ENCODE measurements at regions of chr17 and their contacts with region 1.

Region 1: DNA sequence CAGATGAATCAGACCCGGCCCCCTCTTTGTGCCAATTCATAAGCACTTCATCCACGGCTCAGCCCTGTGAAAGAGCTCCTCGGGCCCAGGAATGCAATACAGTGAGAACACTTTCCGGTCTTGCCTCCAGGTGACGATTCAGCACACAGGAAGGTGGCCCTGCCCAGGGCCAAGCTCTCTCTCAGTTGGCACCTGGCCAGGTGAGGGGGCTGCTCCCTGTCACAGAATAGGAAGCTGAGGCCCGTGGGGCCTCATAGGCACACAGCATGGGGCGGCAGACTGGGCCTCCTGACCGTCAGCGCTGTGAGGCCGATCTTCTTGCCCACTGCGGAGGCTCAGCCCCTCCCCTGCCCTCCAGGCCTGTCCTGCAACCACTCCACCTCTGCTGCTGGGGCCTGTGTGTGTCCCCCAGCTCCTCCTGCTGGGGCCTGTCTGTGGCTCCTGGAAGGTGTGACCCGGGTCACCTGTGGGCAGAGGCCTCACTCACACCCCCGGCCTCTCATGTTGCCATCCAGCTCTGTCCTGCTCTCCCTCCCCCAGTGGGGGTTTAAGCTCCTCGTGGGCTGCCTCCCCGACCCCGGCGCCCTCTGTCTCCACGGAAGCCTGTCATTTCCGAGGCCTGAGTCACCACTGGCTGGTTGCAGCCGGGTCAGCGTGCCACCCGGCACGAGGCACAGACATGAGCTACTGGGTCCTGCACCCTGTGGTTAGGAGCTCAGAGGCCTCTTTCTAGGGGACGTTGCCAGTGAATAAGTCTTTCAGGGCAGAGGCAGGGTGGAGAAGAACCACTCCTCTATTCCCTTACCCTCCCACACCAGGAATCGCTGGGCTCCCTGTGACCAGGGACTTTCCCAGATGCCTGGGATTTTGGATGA is 114.4 kb downstream of the SEC14L1 start:
- DNase-seq: peak; percentile 68
- H3K4me3 ChIP-seq: no peak overlapping the region
- H3K27ac ChIP-seq: peak overlapping the region; percentile 53 to 76; a peak in 3 of 4 replicates
- H3K4me1 ChIP-seq: peaks cover 11 to 23% of the 10 kb centered on the region in 2 experiments; a peak in 3 of 4 replicates
- H3K27me3 ChIP-seq: no peaks in the 10 kb centered on the region
- CTCF ChIP-seq: no peak
- EP300 ChIP-seq: peak in 1 of 2 experiments; percentile 97; a peak in 2 of 4 replicates
- RAD21 ChIP-seq: no peak

Region 2: DNA sequence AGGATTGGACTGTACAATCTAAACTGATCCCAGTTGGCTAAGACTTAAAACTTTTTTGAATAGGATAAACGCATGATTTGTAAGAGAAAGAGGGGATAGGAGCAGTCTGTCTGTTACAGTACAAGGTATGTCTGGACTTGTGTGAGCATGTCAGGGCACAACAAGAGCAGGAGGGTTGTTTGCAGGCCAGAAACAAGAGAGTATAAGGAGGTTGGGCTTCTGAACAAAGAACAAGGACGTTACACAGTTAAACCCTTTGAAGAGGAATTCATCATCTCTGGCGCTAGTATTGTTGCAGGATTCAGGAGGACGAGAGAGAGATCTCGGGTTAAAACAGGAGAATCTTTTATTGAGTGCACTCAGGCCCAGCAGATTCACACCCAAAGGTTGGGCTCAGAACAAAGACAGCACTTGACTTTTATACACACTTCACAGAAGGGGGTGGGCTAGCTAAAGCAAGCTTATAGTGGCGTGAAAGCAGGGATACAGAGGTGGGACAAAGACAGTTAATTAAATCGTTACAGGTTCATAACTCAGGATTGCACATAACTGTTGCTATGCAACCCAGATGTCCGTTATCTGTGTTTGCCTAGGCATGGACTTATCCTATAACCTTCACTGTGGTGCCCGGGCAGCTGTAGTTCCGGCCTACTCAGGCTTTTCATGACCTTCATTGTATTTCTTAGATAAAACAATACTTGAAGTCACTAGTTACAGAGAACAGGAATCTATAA is 80.1 kb before region 1 on chr17:
- CTCF ChIA-PET with region 1: no interaction called
- POLR2A ChIA-PET with region 1: no interaction called
- DNase-seq: no peak
- H3K4me3 ChIP-seq: peak overlapping the region in 1 of 2 experiments; percentile 6; a peak in 1 of 4 replicates
- H3K27ac ChIP-seq: no peak overlapping the region
- H3K4me1 ChIP-seq: no peaks in the 10 kb centered on the region
- H3K27me3 ChIP-seq: no peaks in the 10 kb centered on the region
- CTCF ChIP-seq: no peak
- EP300 ChIP-seq: no peak
- RAD21 ChIP-seq: no peak

Region 3: DNA sequence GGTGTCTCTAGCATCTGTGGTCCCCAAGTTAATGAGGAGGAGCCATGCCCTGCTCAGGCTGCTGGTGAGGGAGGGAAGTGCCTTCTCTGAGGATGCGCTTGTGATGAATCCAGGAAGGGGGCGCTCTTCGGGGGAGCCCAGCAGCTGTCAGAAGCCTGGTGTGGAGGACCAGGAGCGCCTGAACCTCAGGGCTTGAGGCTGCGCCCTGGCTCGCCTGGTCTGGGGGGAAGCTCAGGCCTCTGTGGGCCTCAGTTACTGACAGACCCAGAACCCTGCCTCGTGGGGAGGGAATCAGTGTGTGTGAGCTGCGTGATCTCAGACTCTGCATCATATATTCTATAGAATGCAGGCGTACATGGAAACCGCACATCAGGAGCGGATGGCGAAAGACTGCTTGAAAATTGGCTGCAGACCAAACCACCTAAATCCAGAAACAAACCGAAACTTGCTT is 11.7 kb after region 1 on chr17:
- CTCF ChIA-PET with region 1: interaction called, 14 read pairs
- POLR2A ChIA-PET with region 1: interaction called, 3 read pairs
- DNase-seq: peak; percentile 71
- H3K4me3 ChIP-seq: no peak overlapping the region
- H3K27ac ChIP-seq: no peak overlapping the region
- H3K4me1 ChIP-seq: peaks cover 0 to 13% of the 10 kb centered on the region in 2 experiments; a peak in 1 of 4 replicates
- H3K27me3 ChIP-seq: no peaks in the 10 kb centered on the region
- CTCF ChIP-seq: peak; percentile 52
- EP300 ChIP-seq: no peak
- RAD21 ChIP-seq: no peak

Region 4: GRCh38 chr17:77365584-77366186 is 110.5 kb after region 1 on chr17:
- CTCF ChIA-PET with region 1: no interaction called
- POLR2A ChIA-PET with region 1: no interaction called
- DNase-seq: peak; percentile 48
- H3K4me3 ChIP-seq: no peak overlapping the region; a peak in 1 of 4 replicates
- H3K27ac ChIP-seq: peak overlapping the region; percentile 80 to 97
- H3K4me1 ChIP-seq: peaks cover 47 to 67% of the 10 kb centered on the region in 2 experiments
- H3K27me3 ChIP-seq: no peaks in the 10 kb centered on the region
- CTCF ChIP-seq: no peak
- EP300 ChIP-seq: 0 out of 4 replicates have a peak, but pooled peaks of 1 of the 2 experiments have one; percentile 4
- RAD21 ChIP-seq: no peak

Region 5: DNA sequence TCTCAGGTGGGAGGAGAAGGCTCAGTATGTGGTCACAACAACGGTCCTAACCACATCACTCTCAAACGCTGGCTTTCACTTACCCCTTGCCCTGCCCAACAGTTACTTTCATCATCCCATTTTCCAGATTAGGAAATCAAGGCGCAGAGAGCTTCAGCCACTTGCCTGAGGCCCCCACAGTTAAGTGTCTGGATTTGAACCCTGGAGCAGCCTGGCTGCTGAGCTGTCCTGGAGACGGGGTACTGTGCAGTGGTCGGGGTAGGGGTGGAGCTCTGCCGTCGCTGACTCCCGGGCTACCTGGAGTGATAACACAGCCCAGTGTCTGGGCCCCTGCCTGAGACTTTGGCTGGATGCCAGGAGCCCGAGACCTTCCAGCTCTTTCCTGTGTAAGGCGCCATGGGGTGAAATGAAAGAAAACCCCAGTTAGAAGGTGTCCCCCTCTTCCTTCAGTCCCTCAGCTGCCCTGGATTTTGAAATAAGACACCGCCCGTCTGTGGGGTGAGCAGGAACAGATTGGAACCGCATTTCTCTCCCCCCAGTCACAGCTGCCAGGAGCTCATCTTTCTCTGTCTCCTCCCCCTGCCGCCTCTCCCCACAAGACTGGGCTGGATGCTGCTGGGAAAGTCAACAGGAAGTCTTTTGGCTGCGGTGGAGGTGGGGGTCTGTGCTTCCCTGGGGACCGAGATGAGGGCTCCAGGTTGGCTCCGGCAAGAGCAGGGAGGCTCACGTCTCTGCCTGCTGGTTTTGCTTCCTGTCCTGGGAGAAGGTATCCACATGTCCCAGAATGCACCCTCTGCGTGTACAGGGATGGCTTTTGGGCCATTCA is 165.8 kb after region 1 on chr17:
- CTCF ChIA-PET with region 1: no interaction called
- POLR2A ChIA-PET with region 1: no interaction called
- DNase-seq: peak; percentile 72
- H3K4me3 ChIP-seq: peak overlapping the region; percentile 2 to 8; a peak in 2 of 4 replicates
- H3K27ac ChIP-seq: peak overlapping the region; percentile 67
- H3K4me1 ChIP-seq: peaks cover 74 to 76% of the 10 kb centered on the region in 2 experiments
- H3K27me3 ChIP-seq: no peaks in the 10 kb centered on the region
- CTCF ChIP-seq: 0 out of 2 replicates have a peak, but pooled peaks have one; percentile 2
- EP300 ChIP-seq: peak; percentile 22 to 58; a peak in 1 of 4 replicates
- RAD21 ChIP-seq: no peak

Measured in SK-N-SH (cell line).